H1 (cell line): ENCODE measurements at regions of chr1 and their contacts with region 1.

Region 1: GRCh38 chr1:25117233-25117823 is 115.0 kb downstream of the SYF2 start:
- DNase-seq: peak; percentile 38 to 77
- H3K4me3 ChIP-seq: no peak overlapping the region
- H3K27ac ChIP-seq: no peak overlapping the region
- H3K4me1 ChIP-seq: no peaks in the 10 kb centered on the region
- H3K27me3 ChIP-seq: no peaks in the 10 kb centered on the region
- CTCF ChIP-seq: peak; percentile 84 to 86 (median 86)
- EP300 ChIP-seq: no peak
- POLR2A ChIP-seq: no peak
- RAD21 ChIP-seq: peak; percentile 67 to 77

Region 2: DNA sequence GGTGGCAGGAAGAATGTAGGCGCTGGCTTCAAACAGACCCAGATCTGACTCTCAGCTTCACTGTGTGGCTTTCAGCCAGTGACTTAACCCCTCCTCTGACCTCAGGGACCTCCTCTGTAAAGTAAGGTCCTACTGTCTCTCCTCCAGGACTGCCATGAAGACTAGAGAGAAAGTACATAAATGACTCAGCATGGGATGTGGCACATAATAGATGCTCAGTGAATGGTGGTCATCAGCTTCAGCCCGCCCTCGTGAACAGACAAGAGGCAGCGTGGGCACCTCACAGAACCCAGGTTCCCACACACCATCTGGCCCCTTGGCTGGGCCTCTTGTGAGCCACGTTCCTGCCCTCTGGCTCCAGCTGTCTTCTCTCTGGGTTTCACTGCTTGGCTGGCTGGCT is 11.0 kb before region 1 on chr1:
- CTCF ChIA-PET with region 1: interaction called, 15 read pairs
- POLR2A ChIA-PET with region 1: no interaction called
- DNase-seq: no peak
- H3K4me3 ChIP-seq: no peak overlapping the region
- H3K27ac ChIP-seq: no peak overlapping the region
- H3K4me1 ChIP-seq: no peaks in the 10 kb centered on the region
- H3K27me3 ChIP-seq: no peaks in the 10 kb centered on the region
- CTCF ChIP-seq: no peak
- EP300 ChIP-seq: no peak
- POLR2A ChIP-seq: no peak
- RAD21 ChIP-seq: no peak

Region 3: DNA sequence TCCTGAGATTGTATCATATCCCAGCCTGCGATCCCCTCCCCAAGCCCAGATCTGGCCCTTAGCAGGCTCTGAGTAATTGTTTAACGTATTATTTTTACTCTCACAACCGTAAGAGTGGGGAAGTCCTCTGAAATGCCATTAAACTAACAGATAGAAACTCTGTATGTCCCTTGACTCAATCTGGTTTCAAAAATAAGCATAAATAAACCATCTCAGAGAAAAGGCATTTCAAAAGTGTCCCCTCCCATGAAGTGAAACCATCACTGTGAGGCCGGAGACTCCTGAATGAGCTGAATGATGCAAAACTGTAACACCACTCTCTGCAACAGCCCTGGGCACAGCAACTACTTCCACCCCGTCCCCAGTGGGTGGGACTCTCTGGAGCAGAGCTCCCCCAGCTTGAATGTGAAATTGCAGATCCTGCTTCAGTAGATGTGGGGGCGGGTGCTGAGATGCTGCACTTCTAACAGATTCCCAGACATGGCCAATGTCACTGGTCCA is 10.8 kb after region 1 on chr1:
- CTCF ChIA-PET with region 1: interaction called, 12 read pairs
- POLR2A ChIA-PET with region 1: no interaction called
- DNase-seq: no peak
- H3K4me3 ChIP-seq: no peak overlapping the region
- H3K27ac ChIP-seq: no peak overlapping the region
- H3K4me1 ChIP-seq: no peaks in the 10 kb centered on the region
- H3K27me3 ChIP-seq: no peaks in the 10 kb centered on the region
- CTCF ChIP-seq: no peak
- EP300 ChIP-seq: no peak
- POLR2A ChIP-seq: no peak
- RAD21 ChIP-seq: no peak